ENCODE measurements at regions of chr9 and their contacts with region 1.

Region 1: DNA sequence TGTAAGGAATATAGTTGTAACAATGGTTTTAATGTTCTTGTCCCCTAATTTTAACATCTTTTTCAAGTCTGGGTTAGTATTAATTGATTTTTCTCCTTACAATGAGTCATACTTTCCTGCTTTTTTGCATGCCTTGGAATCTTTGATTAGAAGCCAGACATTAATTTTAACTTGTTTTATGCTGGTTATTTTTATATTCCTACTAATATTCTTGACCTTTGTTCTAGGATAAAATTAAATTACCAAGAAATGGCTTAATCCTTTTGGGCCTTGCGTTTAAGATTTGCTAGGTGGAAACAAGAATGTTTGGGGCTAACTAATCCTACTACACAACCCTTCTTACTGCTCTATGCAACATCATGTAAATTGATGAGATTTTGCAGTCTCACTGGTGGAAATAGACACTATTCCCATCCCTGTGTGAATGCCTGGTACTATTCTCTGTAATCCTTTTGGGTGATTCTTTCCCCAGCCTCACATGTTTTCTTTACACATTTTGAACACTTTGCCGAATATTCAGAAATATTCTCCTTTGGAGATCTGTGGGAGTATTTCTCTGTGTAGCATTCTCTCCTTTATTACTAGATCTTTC is 47.2 kb downstream of the ZCCHC7 start:
- DNase-seq: no peak
- ATAC-seq: no peak
- H3K4me3 ChIP-seq: no peak overlapping the region
- H3K27ac ChIP-seq: no peak overlapping the region
- H3K4me1 ChIP-seq: no peaks in the 10 kb centered on the region
- H3K27me3 ChIP-seq: no peaks in the 10 kb centered on the region
- CTCF ChIP-seq: no peak

Region 2: GRCh38 chr9:37149666-37150308 is 17.8 kb before region 1 on chr9:
- intact Hi-C with region 1: loop called in 1 of 2 experiments (anchors 1 kb)
- DNase-seq: no peak
- ATAC-seq: no peak
- H3K4me3 ChIP-seq: no peak overlapping the region
- H3K27ac ChIP-seq: no peak overlapping the region
- H3K4me1 ChIP-seq: no peaks in the 10 kb centered on the region
- H3K27me3 ChIP-seq: no peaks in the 10 kb centered on the region
- CTCF ChIP-seq: no peak

Region 3: GRCh38 chr9:37229882-37230487 is 62.4 kb after region 1 on chr9:
- intact Hi-C with region 1: loop called in 1 of 2 experiments (anchors 10 kb)
- DNase-seq: no peak
- ATAC-seq: no peak
- H3K4me3 ChIP-seq: no peak overlapping the region
- H3K27ac ChIP-seq: no peak overlapping the region
- H3K4me1 ChIP-seq: no peaks in the 10 kb centered on the region
- H3K27me3 ChIP-seq: no peaks in the 10 kb centered on the region
- CTCF ChIP-seq: no peak